ENCODE measurements at regions of chr19 and their contacts with region 1.

Region 1: GRCh38 chr19:13262450-13262849 is 112.2 kb downstream of the IER2 start:
- DNase-seq: no peak
- ATAC-seq: peak; percentile 74 to 89 (median 79)
- H3K4me3 ChIP-seq: no peak overlapping the region
- H3K27ac ChIP-seq: no peak overlapping the region
- H3K4me1 ChIP-seq: no peaks in the 10 kb centered on the region
- H3K27me3 ChIP-seq: no peaks in the 10 kb centered on the region
- CTCF ChIP-seq: peak; percentile 56 to 71 (median 60)
- POLR2A ChIP-seq: no peak

Region 2: DNA sequence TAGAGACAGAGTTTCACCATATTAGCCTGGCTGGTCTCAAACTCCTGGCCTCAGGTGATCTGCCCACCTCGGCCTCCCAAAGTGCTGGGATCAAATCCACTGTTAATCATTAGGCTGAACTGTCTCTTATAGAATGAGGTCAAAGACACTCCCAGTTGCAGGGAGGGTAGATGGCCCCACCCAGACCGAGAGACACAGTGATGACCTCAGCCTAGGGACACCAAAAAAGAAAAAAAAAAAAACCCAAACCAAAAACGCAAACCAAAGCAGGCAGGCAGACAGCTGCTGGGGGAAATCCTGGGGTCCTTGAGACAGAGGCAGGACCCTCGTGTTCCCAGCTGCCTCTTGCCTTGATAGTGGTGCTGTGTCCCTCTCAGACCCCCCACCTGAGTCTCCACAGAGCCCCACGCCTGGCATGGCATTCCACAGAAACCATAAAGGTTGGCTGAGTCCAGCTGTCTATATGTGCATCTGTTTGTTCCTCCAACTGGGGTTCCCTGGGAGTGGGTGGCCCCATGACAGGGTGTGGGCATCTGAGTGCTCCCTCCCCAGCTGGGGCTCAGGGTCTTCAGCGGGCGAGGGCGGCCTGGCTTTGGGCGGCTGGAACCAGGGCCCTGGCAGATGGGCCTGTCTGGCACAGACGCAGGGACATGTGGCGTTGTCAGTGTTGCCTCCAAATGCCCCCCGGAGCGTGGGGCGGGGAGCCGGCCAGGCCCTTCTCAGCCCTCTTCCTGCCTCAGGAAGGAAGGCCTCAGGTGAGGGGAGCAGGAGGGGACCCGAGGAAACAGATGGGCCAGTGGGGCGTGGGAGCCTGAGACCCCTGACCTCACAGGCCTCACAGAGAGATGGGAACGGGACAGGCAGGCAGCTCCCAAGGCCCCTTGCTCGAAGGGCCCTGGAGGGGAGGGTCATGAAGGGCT is 287.9 kb before region 1 on chr19:
- intact Hi-C with region 1: loop called (anchors 10 kb)
- DNase-seq: no peak
- ATAC-seq: no peak
- H3K4me3 ChIP-seq: no peak overlapping the region
- H3K27ac ChIP-seq: no peak overlapping the region
- H3K4me1 ChIP-seq: peaks cover 0 to 4% (median 0%) of the 10 kb centered on the region in 4 donors
- H3K27me3 ChIP-seq: no peaks in the 10 kb centered on the region
- CTCF ChIP-seq: no peak
- POLR2A ChIP-seq: no peak

Region 3: GRCh38 chr19:13037161-13037560 is 225.3 kb before region 1 on chr19:
- intact Hi-C with region 1: no loop called
- DNase-seq: no peak
- ATAC-seq: no peak
- H3K4me3 ChIP-seq: no peak overlapping the region
- H3K27ac ChIP-seq: no peak overlapping the region
- H3K4me1 ChIP-seq: peaks cover 0 to 50% (median 19%) of the 10 kb centered on the region in 4 donors
- H3K27me3 ChIP-seq: no peaks in the 10 kb centered on the region
- CTCF ChIP-seq: no peak
- POLR2A ChIP-seq: no peak

Region 4: GRCh38 chr19:13104360-13104847 is 158.0 kb before region 1 on chr19:
- intact Hi-C with region 1: loop called in 1 of 2 experiments (anchors 10 kb)
- DNase-seq: peak; percentile 69 to 83 (median 75)
- ATAC-seq: peak; percentile 31 to 44 (median 38)
- H3K4me3 ChIP-seq: peak overlapping the region; percentile 10 to 20 (median 16)
- H3K27ac ChIP-seq: peak overlapping the region; percentile 6 to 87 (median 76)
- H3K4me1 ChIP-seq: peaks cover 0 to 15% (median 6%) of the 10 kb centered on the region in 4 donors
- H3K27me3 ChIP-seq: no peaks in the 10 kb centered on the region
- CTCF ChIP-seq: peak; percentile 36 to 55 (median 46)
- POLR2A ChIP-seq: no peak

Region 5: DNA sequence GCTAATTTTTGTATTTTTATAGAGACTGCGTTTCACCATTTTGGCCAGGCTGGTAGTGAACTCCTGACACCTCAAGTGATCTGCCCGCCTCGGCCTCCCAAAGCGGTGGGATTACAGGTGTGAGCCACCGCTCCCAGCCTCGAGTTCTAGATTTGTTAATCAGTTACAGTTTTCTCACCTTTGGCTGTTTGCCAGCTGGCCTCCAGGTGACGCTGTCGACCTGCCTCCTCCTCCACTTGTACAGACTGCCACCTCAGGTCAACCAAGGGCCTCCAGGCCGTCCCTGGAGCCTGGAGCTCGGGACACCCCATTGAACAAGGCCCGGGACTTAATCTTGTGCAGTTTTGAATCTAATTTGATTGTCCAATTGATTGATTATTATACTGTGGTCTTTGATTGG is 66.8 kb before region 1 on chr19:
- intact Hi-C with region 1: loop called in 1 of 2 experiments (anchors 10 kb)
- DNase-seq: peak; percentile 75 to 91 (median 82)
- ATAC-seq: peak; percentile 68 to 81 (median 74)
- H3K4me3 ChIP-seq: no peak overlapping the region
- H3K27ac ChIP-seq: peak overlapping the region in 2 of 3 donors; percentile 56 to 79
- H3K4me1 ChIP-seq: peaks cover 0 to 30% (median 12%) of the 10 kb centered on the region in 4 donors
- H3K27me3 ChIP-seq: no peaks in the 10 kb centered on the region
- CTCF ChIP-seq: peak in 2 of 4 donors; percentile 27 to 36
- POLR2A ChIP-seq: no peak

Region 6: DNA sequence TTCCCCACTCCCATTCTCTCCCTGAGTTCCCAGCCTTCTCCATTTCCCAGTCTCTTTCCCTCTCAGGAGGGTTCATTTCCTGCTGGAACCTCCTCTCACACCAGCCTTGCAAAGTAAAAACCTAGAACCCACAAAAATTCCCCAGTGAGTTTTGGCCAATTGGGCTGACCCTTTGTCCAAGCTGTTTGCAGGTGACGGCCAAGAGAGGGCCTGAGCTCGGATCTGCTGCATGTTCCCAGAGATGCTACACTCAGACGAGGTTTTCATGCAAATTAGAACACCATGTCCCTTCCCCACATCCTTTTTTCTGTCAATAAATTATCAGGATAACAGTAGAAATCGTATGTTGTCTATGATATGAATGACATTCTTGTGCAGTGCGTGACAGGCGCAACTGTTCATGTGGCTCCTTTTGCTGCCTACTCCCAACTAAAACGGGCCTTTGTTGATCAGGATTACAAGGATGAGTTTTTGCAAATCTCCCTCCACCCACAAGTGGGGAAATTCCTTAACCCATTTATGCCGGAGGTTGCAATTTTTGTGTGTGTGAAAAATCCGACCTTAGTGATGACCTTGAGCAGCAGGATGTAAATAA is 94.3 kb after region 1 on chr19:
- intact Hi-C with region 1: no loop called
- DNase-seq: no peak
- ATAC-seq: no peak
- H3K4me3 ChIP-seq: no peak overlapping the region
- H3K27ac ChIP-seq: no peak overlapping the region
- H3K4me1 ChIP-seq: no peaks in the 10 kb centered on the region
- H3K27me3 ChIP-seq: no peaks in the 10 kb centered on the region
- CTCF ChIP-seq: no peak
- POLR2A ChIP-seq: no peak